ENCODE measurements at regions of chr11 and their contacts with region 1.

Region 1: GRCh38 chr11:65791691-65792213 is 4.9 kb downstream of the OVOL1 start:
- DNase-seq: peak; percentile 76
- H3K4me3 Mint-ChIP-seq: peak overlapping the region; percentile 61
- H3K27ac Mint-ChIP-seq: peak overlapping the region; percentile 64
- H3K4me1 Mint-ChIP-seq: peaks cover 37% of the 10 kb centered on the region
- H3K27me3 Mint-ChIP-seq: no peaks in the 10 kb centered on the region
- CTCF ChIP-seq: no peak

Region 2: DNA sequence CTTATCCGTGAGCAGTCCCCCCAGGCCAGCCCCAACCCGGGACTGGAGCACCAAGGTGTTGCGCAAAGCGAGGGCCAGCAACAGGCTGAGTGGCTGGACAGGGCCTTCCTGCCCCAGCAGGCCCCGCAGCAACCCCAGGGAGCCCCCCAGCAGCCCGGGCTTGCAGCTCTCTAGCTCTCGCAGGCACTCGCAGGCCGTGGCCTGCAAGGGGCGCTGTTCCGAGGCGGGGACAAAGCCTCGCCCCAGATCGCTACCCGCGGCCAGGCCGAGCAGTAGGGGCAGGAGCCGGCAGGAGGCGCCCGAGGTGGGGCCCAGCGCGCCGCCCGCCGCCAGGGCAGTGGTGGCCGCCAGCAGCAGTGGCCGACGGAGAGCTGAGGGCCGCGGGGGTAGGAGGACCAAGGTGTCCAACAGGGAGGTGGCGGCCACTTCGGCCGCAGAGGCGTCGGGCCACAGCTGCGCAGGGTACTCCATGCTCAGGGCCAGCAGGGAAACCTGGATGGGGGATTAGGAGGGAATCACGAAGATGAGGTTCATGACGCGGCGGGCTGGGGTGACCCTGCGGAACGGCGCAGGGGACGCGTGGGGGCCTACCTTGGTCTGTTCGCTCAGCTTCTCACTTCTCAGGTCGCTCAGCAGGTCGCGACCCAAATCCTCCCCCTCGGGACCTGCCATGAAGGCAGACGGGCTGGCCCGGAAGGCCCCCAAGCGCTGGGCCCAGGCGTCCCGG is 11.7 kb before region 1 on chr11:
- CTCF ChIA-PET with region 1: interaction called, 13 read pairs
- intact Hi-C with region 1: no loop called
- DNase-seq: peak; percentile 93
- H3K4me3 Mint-ChIP-seq: peak overlapping the region; percentile 98
- H3K27ac Mint-ChIP-seq: peak overlapping the region; percentile 96
- H3K4me1 Mint-ChIP-seq: peaks cover 16% of the 10 kb centered on the region
- H3K27me3 Mint-ChIP-seq: no peaks in the 10 kb centered on the region
- CTCF ChIP-seq: peak; percentile 94